ENCODE measurements at regions of chr2 and their contacts with region 1.

Region 1: GRCh38 chr2:178914259-178914849 is 107.1 kb upstream of the TTN start:
- DNase-seq: peak; percentile 39
- ATAC-seq: peak; percentile 95
- H3K4me3 ChIP-seq: no peak overlapping the region
- H3K27ac ChIP-seq: no peak overlapping the region
- H3K4me1 ChIP-seq: no peaks in the 10 kb centered on the region
- H3K27me3 ChIP-seq: no peaks in the 10 kb centered on the region
- CTCF ChIP-seq: peak; percentile 75 to 84 (median 75)
- EP300 ChIP-seq: no peak
- POLR2A ChIP-seq: no peak
- RAD21 ChIP-seq: peak; percentile 59

Region 2: GRCh38 chr2:178296394-178297097 is 617.8 kb before region 1 on chr2:
- CTCF ChIA-PET with region 1: no interaction called
- POLR2A ChIA-PET with region 1: no interaction called
- RAD21 ChIA-PET with region 1: no interaction called
- SMC1A ChIA-PET with region 1: no interaction called
- in situ Hi-C with region 1: no loop called
- intact Hi-C with region 1: no loop called
- DNase-seq: peak; percentile 19
- ATAC-seq: peak; percentile 79
- H3K4me3 ChIP-seq: no peak overlapping the region
- H3K27ac ChIP-seq: no peak overlapping the region
- H3K4me1 ChIP-seq: no peaks in the 10 kb centered on the region
- H3K27me3 ChIP-seq: no peaks in the 10 kb centered on the region
- CTCF ChIP-seq: no peak
- EP300 ChIP-seq: no peak
- POLR2A ChIP-seq: no peak
- RAD21 ChIP-seq: no peak

Region 3: DNA sequence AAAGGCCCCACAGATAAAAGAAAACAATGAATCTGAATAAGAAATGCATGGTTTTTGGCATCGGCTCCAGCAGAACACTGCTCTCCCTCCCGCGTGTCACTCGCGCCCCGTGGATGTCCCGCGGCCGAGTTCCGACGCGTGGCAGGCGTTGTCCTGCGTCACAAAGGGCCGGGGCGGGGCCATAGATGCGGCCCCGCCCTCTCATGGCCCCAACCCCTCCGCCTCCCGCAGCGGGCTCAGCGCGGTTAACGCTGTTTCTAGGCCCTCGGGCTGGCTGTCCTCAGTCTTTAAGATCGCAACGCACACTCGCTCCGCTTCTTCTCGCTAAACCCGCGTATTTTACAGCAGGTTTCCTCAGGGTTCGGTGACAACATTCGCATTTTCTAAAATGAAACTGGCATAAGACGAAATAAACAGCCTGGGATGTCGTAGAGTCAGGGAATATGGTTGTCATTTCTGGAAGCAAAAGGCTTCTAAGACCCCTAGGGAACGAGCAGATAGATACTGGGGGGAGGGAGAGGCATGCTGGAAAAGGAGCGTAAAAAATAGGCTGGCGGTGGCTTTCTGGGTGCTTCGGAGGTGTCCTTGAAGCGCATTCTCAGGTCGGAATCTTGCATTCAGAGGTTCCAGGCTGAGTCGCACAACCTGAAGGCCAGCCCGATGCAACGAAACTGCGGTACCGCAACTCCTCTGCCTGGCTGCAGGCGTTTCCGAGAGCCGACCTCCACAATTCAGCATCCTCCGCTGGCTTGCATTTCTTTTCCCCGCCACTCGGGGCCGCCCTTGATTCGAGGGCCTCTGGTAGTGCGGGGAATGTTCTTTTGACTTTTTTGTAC is 435.7 kb before region 1 on chr2 and contains the start of gene FKBP7:
- CTCF ChIA-PET with region 1: no interaction called
- POLR2A ChIA-PET with region 1: no interaction called
- RAD21 ChIA-PET with region 1: no interaction called
- SMC1A ChIA-PET with region 1: no interaction called
- in situ Hi-C with region 1: no loop called
- intact Hi-C with region 1: loop called (anchors 10 kb)
- DNase-seq: peak; percentile 33
- ATAC-seq: peak; percentile 75
- H3K4me3 ChIP-seq: peak within 1 kb of the TSS; percentile 99
- H3K27ac ChIP-seq: peak within 1 kb of the TSS; percentile 88
- H3K4me1 ChIP-seq: peaks cover 7% of the 10 kb centered on the region; the same call in 1 of the 2 replicates
- H3K27me3 ChIP-seq: no peaks in the 10 kb centered on the region
- CTCF ChIP-seq: peak; percentile 89 to 95 (median 91)
- EP300 ChIP-seq: peak in 1 of 2 experiments; percentile 43; a peak in 1 of 4 replicates
- POLR2A ChIP-seq: peak; percentile 80
- RAD21 ChIP-seq: peak; percentile 92
- polyA plus RNA-seq, gene FKBP7: 16.6 to 16.7 TPM

Region 4: GRCh38 chr2:178674122-178674521 is 240.2 kb before region 1 on chr2:
- CTCF ChIA-PET with region 1: no interaction called
- POLR2A ChIA-PET with region 1: no interaction called
- RAD21 ChIA-PET with region 1: no interaction called
- SMC1A ChIA-PET with region 1: no interaction called
- in situ Hi-C with region 1: no loop called
- intact Hi-C with region 1: no loop called
- DNase-seq: no peak
- ATAC-seq: no peak
- H3K4me3 ChIP-seq: no peak overlapping the region
- H3K27ac ChIP-seq: no peak overlapping the region
- H3K4me1 ChIP-seq: no peaks in the 10 kb centered on the region
- H3K27me3 ChIP-seq: no peaks in the 10 kb centered on the region
- CTCF ChIP-seq: no peak
- EP300 ChIP-seq: no peak
- POLR2A ChIP-seq: no peak
- RAD21 ChIP-seq: no peak

Region 5: GRCh38 chr2:178761759-178762371 is 152.5 kb before region 1 on chr2:
- CTCF ChIA-PET with region 1: interaction called, 7 read pairs
- POLR2A ChIA-PET with region 1: no interaction called
- RAD21 ChIA-PET with region 1: interaction called, 4 read pairs
- SMC1A ChIA-PET with region 1: interaction called, 4 read pairs
- in situ Hi-C with region 1: no loop called
- intact Hi-C with region 1: loop called (anchors 1 kb)
- DNase-seq: peak; percentile 12
- ATAC-seq: peak; percentile 83
- H3K4me3 ChIP-seq: no peak overlapping the region
- H3K27ac ChIP-seq: no peak overlapping the region
- H3K4me1 ChIP-seq: no peaks in the 10 kb centered on the region
- H3K27me3 ChIP-seq: no peaks in the 10 kb centered on the region
- CTCF ChIP-seq: peak; percentile 68 to 79 (median 69)
- EP300 ChIP-seq: no peak
- POLR2A ChIP-seq: no peak
- RAD21 ChIP-seq: peak; percentile 91

Region 6: DNA sequence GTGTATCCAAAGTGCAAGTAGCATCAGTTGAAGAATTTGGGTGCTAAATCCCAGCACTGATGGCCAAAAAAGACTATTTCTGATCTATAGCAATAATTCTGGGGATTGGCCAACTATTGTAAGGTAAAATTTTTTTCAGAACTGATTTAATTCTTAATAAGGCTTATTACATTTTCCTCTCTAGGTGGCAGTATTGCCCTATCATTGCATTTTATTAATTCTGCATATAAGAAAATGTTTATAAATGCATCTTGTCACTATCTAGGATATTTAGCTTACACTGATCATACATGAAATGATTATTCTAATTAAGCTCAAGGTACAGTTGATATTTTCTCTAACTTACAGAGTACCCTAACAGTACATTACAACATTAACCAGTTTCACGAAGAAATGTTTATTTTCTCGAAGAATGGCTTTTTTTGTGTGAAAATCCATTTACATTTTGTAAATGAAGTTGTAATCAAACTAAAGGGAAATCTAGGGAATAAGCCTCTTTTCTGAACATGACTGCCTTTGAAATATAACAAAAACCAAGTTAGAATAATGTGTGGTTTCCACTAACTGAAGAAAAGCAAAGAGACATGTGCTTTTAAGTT is 118.2 kb before region 1 on chr2:
- CTCF ChIA-PET with region 1: interaction called, 8 read pairs
- POLR2A ChIA-PET with region 1: no interaction called
- RAD21 ChIA-PET with region 1: no interaction called
- SMC1A ChIA-PET with region 1: interaction called, 8 read pairs
- in situ Hi-C with region 1: no loop called
- intact Hi-C with region 1: loop called (anchors 1 kb)
- DNase-seq: no peak
- ATAC-seq: peak; percentile 46; the same call in 1 of the 3 replicates
- H3K4me3 ChIP-seq: no peak overlapping the region
- H3K27ac ChIP-seq: no peak overlapping the region
- H3K4me1 ChIP-seq: no peaks in the 10 kb centered on the region
- H3K27me3 ChIP-seq: no peaks in the 10 kb centered on the region
- CTCF ChIP-seq: peak; percentile 29 to 57 (median 44); a peak in 3 of 6 replicates
- EP300 ChIP-seq: no peak
- POLR2A ChIP-seq: no peak
- RAD21 ChIP-seq: peak; percentile 62

Region 7: DNA sequence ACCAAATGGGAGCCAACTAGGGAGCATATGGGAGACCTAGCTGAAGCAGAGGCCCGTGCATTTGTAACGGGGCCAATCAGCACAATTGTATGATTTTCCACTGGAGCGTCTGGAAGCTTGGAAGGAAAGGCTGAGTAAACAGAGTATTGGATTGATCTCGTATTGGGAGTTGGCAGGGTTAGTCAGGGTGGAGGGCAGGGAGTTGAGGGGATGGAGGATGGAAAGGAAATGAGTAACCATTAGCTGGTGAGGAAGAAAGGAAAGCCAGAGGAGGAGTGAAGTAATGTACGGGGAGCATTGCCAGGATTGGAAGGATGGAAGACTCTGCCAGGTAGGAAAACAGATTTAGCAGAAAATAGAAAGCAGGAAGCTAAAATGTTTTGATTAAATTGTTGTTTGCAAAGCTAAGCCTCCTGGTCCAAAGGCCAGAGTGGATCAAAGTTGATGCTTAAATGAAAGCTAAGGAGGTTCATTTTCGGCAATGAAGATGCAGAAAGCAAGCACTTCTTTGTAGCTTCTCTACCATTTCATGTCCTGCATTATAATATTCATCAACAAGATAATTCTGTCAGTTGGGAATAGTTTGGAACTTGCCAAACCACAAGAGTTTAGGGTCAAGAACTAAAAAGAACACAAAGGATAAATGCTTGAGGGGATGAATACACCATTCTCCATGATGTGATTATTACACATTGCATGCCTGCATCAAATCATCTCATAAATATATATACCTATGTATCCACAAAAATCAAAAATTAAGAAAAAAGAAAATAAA is 31.5 kb before region 1 on chr2:
- CTCF ChIA-PET with region 1: interaction called, 6 read pairs
- POLR2A ChIA-PET with region 1: no interaction called
- RAD21 ChIA-PET with region 1: no interaction called
- SMC1A ChIA-PET with region 1: interaction called, 3 read pairs
- in situ Hi-C with region 1: no loop called
- intact Hi-C with region 1: loop called (anchors 1 kb)
- DNase-seq: no peak
- ATAC-seq: no peak
- H3K4me3 ChIP-seq: no peak overlapping the region
- H3K27ac ChIP-seq: no peak overlapping the region
- H3K4me1 ChIP-seq: no peaks in the 10 kb centered on the region
- H3K27me3 ChIP-seq: no peaks in the 10 kb centered on the region
- CTCF ChIP-seq: no peak
- EP300 ChIP-seq: no peak
- POLR2A ChIP-seq: no peak
- RAD21 ChIP-seq: no peak

Region 8: DNA sequence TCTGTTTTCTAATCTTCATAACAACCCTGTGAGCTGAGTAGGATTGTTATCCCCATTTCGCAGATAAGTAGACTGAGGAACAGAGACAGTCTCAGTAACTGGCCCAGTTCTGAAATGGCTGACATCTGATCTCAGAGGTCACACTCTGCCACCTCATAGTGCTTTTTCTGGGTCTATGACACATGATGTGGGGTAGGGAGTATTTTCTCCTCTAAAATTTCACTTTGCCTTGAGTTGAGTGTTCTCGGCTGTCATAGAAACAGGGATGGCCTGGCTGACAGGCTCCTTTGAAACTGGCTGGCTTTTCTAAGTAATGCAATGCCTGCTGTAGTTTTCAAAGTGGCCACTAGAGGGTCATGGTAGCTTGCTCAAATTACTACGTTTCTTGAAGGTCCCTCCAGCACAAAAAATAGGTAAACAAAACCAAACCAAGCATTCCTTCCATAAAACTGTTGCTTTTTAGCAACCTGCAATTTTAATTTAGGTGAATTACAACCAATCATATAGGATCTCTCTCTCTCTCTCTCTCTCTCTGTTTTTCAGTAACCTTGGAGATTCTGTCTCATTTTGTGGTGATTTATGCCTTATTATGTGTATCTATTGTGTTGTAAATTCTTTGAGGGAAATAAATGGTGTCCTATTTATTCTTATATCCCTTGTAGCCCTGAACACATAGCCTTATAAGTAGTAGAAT is 22.9 kb before region 1 on chr2:
- CTCF ChIA-PET with region 1: interaction called, 17 read pairs
- POLR2A ChIA-PET with region 1: no interaction called
- RAD21 ChIA-PET with region 1: interaction called, 7 read pairs
- SMC1A ChIA-PET with region 1: interaction called, 14 read pairs
- in situ Hi-C with region 1: no loop called
- intact Hi-C with region 1: loop called (anchors 2 kb)
- DNase-seq: peak; percentile 33
- ATAC-seq: peak; percentile 94
- H3K4me3 ChIP-seq: no peak overlapping the region
- H3K27ac ChIP-seq: no peak overlapping the region
- H3K4me1 ChIP-seq: no peaks in the 10 kb centered on the region
- H3K27me3 ChIP-seq: no peaks in the 10 kb centered on the region
- CTCF ChIP-seq: peak; percentile 87 to 91 (median 90)
- EP300 ChIP-seq: no peak
- POLR2A ChIP-seq: no peak
- RAD21 ChIP-seq: peak; percentile 89

Region 9: GRCh38 chr2:178928077-178928476 is 13.7 kb after region 1 on chr2:
- CTCF ChIA-PET with region 1: interaction called, 38 read pairs
- POLR2A ChIA-PET with region 1: interaction called, 5 read pairs
- RAD21 ChIA-PET with region 1: interaction called, 26 read pairs
- SMC1A ChIA-PET with region 1: interaction called, 26 read pairs
- in situ Hi-C with region 1: no loop called
- intact Hi-C with region 1: no loop called
- DNase-seq: peak; percentile 24
- ATAC-seq: peak; percentile 85
- H3K4me3 ChIP-seq: 0 out of 2 replicates have a peak overlapping the region, but pooled peaks have one; percentile 64
- H3K27ac ChIP-seq: no peak overlapping the region; the same call in 1 of the 2 replicates
- H3K4me1 ChIP-seq: peaks cover 14% of the 10 kb centered on the region
- H3K27me3 ChIP-seq: no peaks in the 10 kb centered on the region
- CTCF ChIP-seq: no peak
- EP300 ChIP-seq: no peak
- POLR2A ChIP-seq: no peak
- RAD21 ChIP-seq: no peak